Stomach (tissue), 19 donors: ENCODE measurements at regions of chr2 and their contacts with region 1.

Region 1: GRCh38 chr2:64711252-64711800 is 57.6 kb upstream of the SERTAD2 start:
- DNase-seq: peak in 1 of 2 donors; percentile 58
- H3K4me3 ChIP-seq: no peak overlapping the region
- H3K27ac ChIP-seq: no peak overlapping the region
- H3K4me1 ChIP-seq: no peaks in the 10 kb centered on the region
- H3K27me3 ChIP-seq: no peaks in the 10 kb centered on the region
- CTCF ChIP-seq: no peak
- EP300 ChIP-seq: no peak
- POLR2A ChIP-seq: no peak

Region 2: GRCh38 chr2:64666810-64667438 is 44.4 kb before region 1 on chr2:
- intact Hi-C with region 1: loop called (anchors 10 kb)
- DNase-seq: no peak
- H3K4me3 ChIP-seq: no peak overlapping the region
- H3K27ac ChIP-seq: peak overlapping the region in 1 of 5 donors; percentile 16
- H3K4me1 ChIP-seq: peaks cover 0 to 15% (median 7%) of the 10 kb centered on the region in 4 donors
- H3K27me3 ChIP-seq: no peaks in the 10 kb centered on the region
- CTCF ChIP-seq: no peak
- EP300 ChIP-seq: no peak
- POLR2A ChIP-seq: no peak

Region 3: GRCh38 chr2:66058675-66059074 is 1347.3 kb after region 1 on chr2:
- intact Hi-C with region 1: no loop called
- DNase-seq: no peak
- H3K4me3 ChIP-seq: no peak overlapping the region
- H3K27ac ChIP-seq: no peak overlapping the region
- H3K4me1 ChIP-seq: no peaks in the 10 kb centered on the region
- H3K27me3 ChIP-seq: no peaks in the 10 kb centered on the region
- CTCF ChIP-seq: no peak
- EP300 ChIP-seq: no peak
- POLR2A ChIP-seq: no peak